ENCODE measurements at regions of chr1 and their contacts with region 1.

Region 1: GRCh38 chr1:183817576-183818288 is 12.8 kb downstream of the RGL1 start:
- DNase-seq: no peak
- H3K4me3 ChIP-seq: no peak overlapping the region
- H3K27ac ChIP-seq: no peak overlapping the region
- H3K4me1 ChIP-seq: no peaks in the 10 kb centered on the region
- CTCF ChIP-seq: no peak

Region 2: DNA sequence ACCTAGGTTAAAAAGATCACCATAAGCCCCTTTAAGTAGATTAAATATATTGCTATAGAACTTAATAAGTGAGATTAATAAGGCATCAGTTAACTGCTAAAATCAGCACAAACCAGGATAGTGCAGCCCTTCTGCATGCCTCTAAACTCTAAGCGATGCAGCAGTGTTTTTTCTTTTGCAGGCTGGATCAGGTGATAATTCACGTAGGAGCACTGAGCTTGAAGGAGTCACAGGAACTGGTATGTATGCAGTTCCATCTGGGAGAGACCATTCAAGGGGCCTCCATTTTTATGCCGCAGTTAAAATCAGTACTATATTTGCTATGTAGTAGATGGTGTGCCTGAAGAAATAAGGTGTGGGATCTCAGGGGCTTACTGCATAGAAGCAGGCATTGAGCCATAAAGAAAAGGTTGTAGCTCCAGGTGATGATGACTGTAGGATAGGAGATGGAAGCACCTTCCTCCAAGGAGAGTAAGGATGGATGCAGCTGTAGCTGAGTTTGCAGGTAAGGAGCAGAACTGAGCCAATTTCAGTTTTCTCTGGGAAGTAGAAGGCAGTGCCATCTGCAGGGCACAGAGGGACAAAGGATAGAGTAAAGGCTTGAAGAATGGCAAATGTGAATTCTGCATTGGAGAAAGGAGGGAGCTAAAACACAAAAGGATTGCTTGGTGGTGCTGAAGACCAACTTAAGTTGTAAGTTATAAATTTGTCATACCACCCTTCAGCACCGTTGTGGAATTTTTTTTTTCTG is 1005.6 kb before region 1 on chr1:
- CTCF ChIA-PET with region 1: no interaction called
- POLR2A ChIA-PET with region 1: no interaction called
- intact Hi-C with region 1: no loop called
- DNase-seq: no peak
- H3K4me3 ChIP-seq: no peak overlapping the region
- H3K27ac ChIP-seq: no peak overlapping the region
- H3K4me1 ChIP-seq: no peaks in the 10 kb centered on the region
- CTCF ChIP-seq: peak; percentile 46

Region 3: DNA sequence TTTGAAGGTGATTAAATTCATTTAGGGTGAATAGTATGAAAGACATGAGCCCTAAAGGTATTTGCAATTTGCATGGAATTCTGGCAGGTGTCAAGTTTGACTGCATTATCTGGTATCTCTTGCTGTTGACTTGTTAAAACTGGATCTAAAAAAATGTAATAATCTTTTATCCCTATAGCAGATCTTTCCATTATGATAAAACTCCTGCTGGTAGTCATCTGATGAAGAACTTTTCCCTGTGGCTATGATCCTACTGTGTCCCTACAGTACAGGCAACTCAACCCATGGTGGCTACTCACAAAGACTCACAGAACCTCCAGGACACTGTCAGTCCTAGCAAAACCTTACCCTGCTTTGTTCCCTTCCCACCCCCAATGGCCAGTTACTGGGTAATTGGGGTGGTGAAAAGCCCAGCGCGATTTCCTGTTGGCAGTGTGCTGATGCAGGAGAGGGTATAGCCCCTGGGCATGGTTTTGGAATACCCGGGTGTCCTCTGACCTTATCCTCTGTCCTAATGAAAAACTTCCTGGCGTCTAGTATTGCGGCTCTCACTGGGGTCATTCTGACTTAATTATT is 13.4 kb before region 1 on chr1:
- CTCF ChIA-PET with region 1: no interaction called
- POLR2A ChIA-PET with region 1: no interaction called
- intact Hi-C with region 1: loop called (anchors 2 kb)
- DNase-seq: no peak
- H3K4me3 ChIP-seq: no peak overlapping the region
- H3K27ac ChIP-seq: no peak overlapping the region
- H3K4me1 ChIP-seq: no peaks in the 10 kb centered on the region
- CTCF ChIP-seq: no peak

Region 4: DNA sequence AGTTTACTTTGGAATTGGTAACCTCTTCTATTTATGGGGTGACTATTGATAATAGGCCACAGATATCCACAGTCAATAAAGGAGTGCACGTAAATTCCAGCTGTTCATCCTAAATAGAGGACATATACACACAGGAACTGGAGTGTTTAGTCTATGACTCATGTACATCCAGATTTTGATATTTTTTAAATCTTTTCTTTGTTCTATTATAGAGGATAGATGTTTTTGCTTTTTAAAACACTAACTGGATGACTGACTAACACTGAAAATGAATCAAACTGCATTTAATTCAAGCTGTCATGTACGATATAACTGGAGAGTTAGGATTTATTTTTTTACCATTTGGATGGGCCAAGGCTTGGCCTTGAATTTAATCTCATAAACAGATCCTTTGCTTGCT is 33.1 kb after region 1 on chr1:
- CTCF ChIA-PET with region 1: no interaction called
- POLR2A ChIA-PET with region 1: no interaction called
- intact Hi-C with region 1: no loop called
- DNase-seq: no peak
- H3K4me3 ChIP-seq: no peak overlapping the region
- H3K27ac ChIP-seq: no peak overlapping the region
- H3K4me1 ChIP-seq: no peaks in the 10 kb centered on the region
- CTCF ChIP-seq: no peak

Measured in OCI-LY7 (cell line).